ENCODE measurements at regions of chr15 and their contacts with region 1.

Region 1: DNA sequence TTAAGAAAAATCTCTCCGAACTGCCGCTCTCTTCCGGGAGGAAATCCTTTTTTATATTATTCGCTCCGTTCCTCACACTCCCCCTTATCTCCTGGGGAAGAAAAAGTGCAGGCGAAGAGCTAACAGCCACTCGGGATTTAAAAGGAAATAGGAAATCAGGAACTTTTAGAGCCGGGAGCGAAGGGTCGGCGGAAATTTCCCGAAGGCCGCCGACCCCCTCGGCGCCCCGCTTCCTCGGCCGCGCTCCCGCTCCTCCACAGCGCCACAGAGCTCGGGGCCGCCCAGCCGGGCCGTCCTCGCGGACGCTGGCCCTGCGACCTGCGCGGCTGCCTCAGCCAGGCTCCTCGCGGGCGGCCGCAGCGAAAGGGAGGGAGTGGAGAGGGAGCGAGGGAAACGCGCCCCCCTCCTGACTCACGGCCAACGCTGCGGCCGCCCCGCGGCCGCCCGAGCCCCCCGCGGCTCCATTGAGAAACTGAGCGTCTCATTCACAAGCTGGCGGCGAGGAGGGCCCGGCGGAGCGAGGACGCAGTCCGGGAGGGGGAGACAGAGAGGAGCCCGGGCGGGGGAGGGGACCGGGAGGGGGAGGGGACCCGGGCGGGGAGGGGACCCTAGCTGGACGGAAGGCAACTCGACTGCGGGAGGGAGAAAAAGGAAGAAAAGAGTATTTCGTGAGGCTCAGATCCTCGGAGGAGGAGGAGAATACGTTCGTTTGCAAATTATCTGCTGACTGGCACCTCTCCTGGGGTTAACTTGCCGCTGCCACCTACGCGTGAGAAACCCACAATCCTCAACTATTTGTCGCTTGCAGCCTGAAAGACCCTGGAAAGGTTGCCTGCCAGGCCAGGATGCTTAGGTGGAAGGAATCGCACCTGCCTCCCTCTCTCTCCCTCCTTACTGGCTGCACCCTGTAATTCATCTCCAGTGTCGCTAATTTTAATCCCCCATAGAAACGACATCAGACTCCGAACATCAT is at the start of gene PTPN9:
- DNase-seq: peak; percentile 69 to 86
- H3K4me3 ChIP-seq: peak within 1 kb of the TSS; percentile 92 to 96 (median 94)
- H3K27ac ChIP-seq: peak within 1 kb of the TSS; percentile 76; the same call in 1 of the 2 replicates
- H3K4me1 ChIP-seq: peaks cover 2 to 6% (median 4%) of the 10 kb centered on the region in 4 experiments; a peak in 6 of 7 replicates
- H3K27me3 ChIP-seq: no peaks in the 10 kb centered on the region
- CTCF ChIP-seq: peak in 2 of 3 experiments; percentile 40 to 47; a peak in 3 of 4 replicates
- EP300 ChIP-seq: peak in 1 of 2 experiments; percentile 66; a peak in 1 of 3 replicates
- POLR2A ChIP-seq: peak; percentile 47 to 71
- RAD21 ChIP-seq: peak in 1 of 2 experiments; percentile 23; a peak in 1 of 4 replicates
- total RNA-seq, gene PTPN9: 44.5 and 46.6 TPM in 2 replicates

Region 2: DNA sequence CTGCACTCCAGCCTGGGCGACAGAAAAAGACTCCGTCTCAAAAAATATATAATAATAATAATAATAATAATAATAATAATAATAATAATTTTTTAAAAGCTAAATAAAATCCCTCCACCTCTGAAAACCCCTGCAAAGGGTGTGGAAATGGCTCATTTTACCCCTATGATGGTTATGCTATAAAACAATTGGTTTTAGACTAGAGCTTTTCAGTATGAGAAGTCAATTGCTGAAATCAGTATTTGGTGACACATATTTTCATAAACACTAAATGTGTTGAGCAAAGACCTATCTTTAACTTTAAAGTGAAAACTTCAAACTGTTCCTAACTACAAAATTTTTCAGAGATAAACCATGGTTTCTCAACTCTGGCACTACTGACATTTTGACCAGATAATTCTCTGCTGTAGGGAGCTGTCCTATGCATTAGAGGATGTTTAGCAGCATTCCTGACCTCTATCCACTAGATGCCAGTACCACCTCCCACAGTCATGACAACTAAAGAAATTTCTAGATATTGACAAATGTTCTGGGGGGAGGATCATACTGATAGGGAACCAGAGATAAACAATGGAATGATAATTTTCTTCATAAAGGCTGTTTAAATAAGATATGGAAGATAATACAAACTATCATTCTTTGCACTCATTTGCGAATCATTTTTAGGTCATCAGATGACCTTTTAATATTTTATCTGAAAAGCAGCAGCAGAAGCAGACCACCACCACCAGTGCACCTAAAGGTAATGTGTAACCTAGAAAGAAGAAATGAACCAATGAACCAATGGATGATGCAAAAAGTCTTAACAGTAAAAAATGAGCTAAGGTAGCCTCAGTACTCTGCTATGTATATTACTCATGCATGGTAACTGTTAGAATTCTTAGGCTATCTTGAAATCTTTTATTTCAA is 13.9 kb before region 1 on chr15:
- CTCF ChIA-PET with region 1: interaction called, 4 read pairs
- POLR2A ChIA-PET with region 1: interaction called, 14 read pairs
- DNase-seq: no peak
- H3K4me3 ChIP-seq: no peak overlapping the region
- H3K27ac ChIP-seq: no peak overlapping the region
- H3K4me1 ChIP-seq: peaks cover 0 to 2% (median 0%) of the 10 kb centered on the region in 4 experiments; a peak in 2 of 7 replicates
- H3K27me3 ChIP-seq: no peaks in the 10 kb centered on the region
- CTCF ChIP-seq: no peak
- EP300 ChIP-seq: no peak
- POLR2A ChIP-seq: no peak
- RAD21 ChIP-seq: peak in 1 of 2 experiments; percentile 11; a peak in 1 of 4 replicates

Region 3: GRCh38 chr15:75785771-75786574 is 206.7 kb after region 1 on chr15:
- CTCF ChIA-PET with region 1: no interaction called
- POLR2A ChIA-PET with region 1: no interaction called
- DNase-seq: peak; percentile 59 to 68
- H3K4me3 ChIP-seq: peak overlapping the region in 1 of 4 experiments; percentile 27; a peak in 1 of 8 replicates
- H3K27ac ChIP-seq: no peak overlapping the region
- H3K4me1 ChIP-seq: peaks cover 0 to 2% (median 0%) of the 10 kb centered on the region in 4 experiments; a peak in 1 of 7 replicates
- H3K27me3 ChIP-seq: no peaks in the 10 kb centered on the region
- CTCF ChIP-seq: peak; percentile 46 to 61 (median 50)
- EP300 ChIP-seq: no peak
- POLR2A ChIP-seq: no peak
- RAD21 ChIP-seq: peak; percentile 48 to 67

Measured in H1 (cell line).